ENCODE measurements at regions of chr7 and their contacts with region 1.

Region 1: DNA sequence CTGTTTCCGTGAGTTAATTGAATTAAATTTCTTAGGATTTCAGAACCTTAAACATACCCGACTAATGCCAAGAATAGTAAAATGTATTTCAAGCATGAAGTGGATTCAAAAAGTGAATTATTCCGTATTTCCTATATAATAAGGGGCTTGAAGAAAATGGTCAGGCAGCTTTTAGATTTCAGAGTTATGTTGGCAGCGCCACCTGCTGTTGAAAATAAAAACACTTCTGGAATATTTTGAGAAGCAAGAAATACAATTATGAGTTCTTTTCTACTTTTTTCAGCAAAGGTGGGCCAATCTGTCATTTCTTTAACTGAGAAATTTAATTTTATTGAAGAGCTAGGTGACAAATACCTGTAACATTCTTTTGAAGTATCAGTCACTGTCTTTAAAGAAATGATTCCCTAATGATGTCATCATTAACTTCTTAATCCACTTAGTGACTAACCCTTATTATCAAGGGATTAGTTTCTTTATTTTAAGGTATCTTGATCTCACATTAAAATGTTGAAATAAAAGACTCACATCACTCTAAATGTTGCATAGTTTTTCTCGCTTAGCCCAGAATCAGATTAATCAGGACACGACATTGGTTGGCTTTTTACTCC is 36.6 kb upstream of the AGR3 start:
- DNase-seq: no peak
- H3K4me3 Mint-ChIP-seq: no peak overlapping the region
- H3K27ac Mint-ChIP-seq: no peak overlapping the region
- H3K4me1 Mint-ChIP-seq: peaks cover 8% of the 10 kb centered on the region
- H3K27me3 Mint-ChIP-seq: no peaks in the 10 kb centered on the region

Region 2: DNA sequence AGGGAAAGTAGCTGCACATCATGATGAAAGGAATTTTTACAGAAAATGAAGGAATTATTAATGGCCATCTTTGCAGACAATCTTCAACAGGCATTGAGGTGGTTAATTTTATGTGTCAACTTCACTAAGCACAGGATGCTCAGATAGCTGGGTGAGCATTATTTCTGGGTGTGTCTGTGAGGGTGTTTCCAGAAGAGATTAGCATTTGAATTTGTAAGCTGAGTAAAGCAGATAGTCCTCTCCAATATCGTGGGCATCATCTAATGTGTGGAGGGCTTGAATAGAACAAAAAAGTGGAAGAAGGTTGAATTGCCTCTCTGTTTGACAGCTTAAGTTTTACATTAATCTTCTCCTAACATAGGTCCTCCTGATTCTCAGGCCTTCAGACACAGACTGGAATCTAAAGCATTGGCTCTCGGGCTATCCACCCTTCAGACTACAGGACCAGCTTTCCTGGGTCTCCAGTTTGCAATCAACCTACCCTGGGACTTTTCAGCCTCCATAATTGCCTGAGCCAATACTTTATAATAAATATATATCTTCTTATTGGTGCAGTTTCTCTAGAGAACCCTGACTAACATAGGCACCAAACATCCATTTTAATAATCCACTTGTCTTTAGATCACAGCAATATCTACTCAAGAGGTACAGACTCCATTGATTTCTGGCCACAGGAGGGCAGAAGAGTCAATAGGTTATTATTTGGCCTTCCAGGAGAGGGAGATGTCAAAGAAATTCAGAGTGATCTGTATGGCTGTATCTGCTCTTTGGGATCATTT is 486.6 kb before region 1 on chr7:
- intact Hi-C with region 1: loop called (anchors 1 kb)
- DNase-seq: no peak
- H3K4me3 Mint-ChIP-seq: no peak overlapping the region
- H3K27ac Mint-ChIP-seq: no peak overlapping the region
- H3K4me1 Mint-ChIP-seq: no peaks in the 10 kb centered on the region
- H3K27me3 Mint-ChIP-seq: peaks cover 8% of the 10 kb centered on the region

Region 3: GRCh38 chr7:16604054-16604453 is 314.3 kb before region 1 on chr7:
- intact Hi-C with region 1: loop called (anchors 1 kb)
- DNase-seq: no peak
- H3K4me3 Mint-ChIP-seq: no peak overlapping the region
- H3K27ac Mint-ChIP-seq: no peak overlapping the region
- H3K4me1 Mint-ChIP-seq: no peaks in the 10 kb centered on the region
- H3K27me3 Mint-ChIP-seq: no peaks in the 10 kb centered on the region

Region 4: DNA sequence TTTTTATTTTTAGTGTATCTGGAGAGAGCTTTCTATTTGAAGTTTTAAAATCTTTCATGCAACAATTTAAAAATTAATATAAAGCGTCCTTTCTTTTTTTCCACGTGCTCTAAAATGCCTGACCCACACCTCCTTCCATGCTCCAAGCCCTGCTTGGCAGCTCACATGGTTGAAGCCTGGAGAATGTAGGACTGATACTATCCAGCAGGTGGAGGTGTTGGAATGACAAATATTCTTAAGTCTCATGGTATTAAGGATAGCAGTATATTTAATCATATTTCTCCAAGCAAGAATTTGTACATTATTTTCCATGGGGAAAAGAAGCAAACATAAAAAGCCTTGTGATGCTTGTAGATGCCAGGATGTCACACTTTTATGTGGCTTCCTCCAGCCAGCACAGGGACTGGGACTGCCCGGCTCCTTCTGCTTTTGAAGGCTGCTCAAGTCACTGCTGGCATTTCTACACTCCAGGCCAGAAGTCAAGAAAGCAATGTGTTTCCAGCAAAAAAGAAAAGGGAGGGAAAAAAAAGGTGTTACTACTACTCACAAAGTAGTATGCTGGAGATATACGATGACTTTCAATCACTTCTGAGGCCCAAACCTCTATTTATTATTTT is 222.7 kb before region 1 on chr7:
- intact Hi-C with region 1: loop called (anchors 1 kb)
- DNase-seq: no peak
- H3K4me3 Mint-ChIP-seq: no peak overlapping the region
- H3K27ac Mint-ChIP-seq: no peak overlapping the region
- H3K4me1 Mint-ChIP-seq: no peaks in the 10 kb centered on the region
- H3K27me3 Mint-ChIP-seq: no peaks in the 10 kb centered on the region

Region 5: DNA sequence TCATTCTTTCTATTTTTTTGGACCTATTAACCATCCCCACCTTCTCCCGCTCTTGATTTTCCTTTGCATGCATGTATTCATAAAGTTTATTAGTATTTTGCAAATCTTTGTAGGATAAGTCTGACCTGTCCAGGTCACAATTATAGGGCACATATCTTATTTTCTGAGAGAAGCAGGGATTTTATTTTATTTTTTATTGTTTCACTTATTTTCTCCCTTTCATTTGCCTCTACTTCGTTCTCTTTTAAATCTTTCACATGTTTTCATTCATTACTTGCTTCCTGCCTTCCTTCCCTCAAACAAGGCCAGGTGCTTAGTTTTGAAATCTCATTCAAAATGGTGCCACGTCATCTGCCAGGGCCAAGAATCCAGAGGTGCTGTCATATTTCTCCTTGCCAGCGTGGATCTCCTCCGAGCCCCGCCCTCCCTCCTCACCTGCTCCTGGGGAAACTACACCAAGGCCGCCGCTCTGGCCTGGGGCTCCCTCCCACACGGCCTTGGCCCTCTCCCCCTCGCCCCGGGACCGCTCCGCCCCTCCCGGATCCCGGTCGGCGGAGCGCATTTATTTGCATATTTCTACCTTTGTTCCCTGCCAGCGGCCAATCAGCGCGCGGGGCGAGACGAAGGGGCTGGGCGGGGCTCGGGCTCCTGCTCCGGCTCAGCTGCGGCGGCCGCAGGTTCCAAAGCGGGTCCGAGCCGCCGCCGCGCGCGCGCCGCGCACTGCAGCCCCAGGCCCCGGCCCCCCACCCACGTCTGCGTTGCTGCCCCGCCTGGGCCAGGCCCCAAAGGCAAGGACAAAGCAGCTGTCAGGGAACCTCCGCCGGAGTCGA is 165.1 kb before region 1 on chr7 and contains the start of gene TSPAN13:
- intact Hi-C with region 1: loop called (anchors 5 kb)
- DNase-seq: peak; percentile 60
- H3K4me3 Mint-ChIP-seq: peak within 1 kb of the TSS; percentile 78
- H3K27ac Mint-ChIP-seq: peak within 1 kb of the TSS; percentile 42
- H3K4me1 Mint-ChIP-seq: peaks cover 15% of the 10 kb centered on the region
- H3K27me3 Mint-ChIP-seq: peaks cover 43% of the 10 kb centered on the region
- total RNA-seq, gene TSPAN13: 0.96 and 1.3 TPM in 2 replicates

Region 6: DNA sequence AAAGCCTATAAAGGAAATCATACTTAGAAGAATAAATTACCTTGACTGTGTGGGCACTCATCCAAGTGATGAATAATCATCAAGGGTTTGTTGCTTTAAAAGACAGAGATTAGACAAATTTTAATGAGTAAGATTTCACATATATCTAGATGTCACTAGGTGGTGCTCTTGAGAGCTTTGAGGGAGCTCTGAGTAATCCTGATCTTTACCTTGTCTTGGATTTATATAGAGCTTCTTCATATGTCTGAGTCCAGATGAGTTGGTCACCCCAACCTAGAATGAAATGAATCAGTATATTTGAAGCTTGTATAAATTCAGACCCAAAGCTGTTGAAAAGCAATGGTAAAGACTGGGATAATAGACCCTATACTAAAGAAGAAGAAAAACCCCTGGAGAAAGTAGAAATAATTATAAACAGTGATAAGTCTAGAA is 117.3 kb before region 1 on chr7:
- intact Hi-C with region 1: loop called (anchors 1 kb)
- DNase-seq: no peak
- H3K4me3 Mint-ChIP-seq: no peak overlapping the region
- H3K27ac Mint-ChIP-seq: no peak overlapping the region
- H3K4me1 Mint-ChIP-seq: no peaks in the 10 kb centered on the region
- H3K27me3 Mint-ChIP-seq: peaks cover 4% of the 10 kb centered on the region

Region 7: GRCh38 chr7:16891338-16891737 is 27.1 kb before region 1 on chr7:
- intact Hi-C with region 1: loop called (anchors 2 kb)
- DNase-seq: no peak
- H3K4me3 Mint-ChIP-seq: no peak overlapping the region
- H3K27ac Mint-ChIP-seq: no peak overlapping the region
- H3K4me1 Mint-ChIP-seq: peaks cover 9% of the 10 kb centered on the region
- H3K27me3 Mint-ChIP-seq: peaks cover 4% of the 10 kb centered on the region

Region 8: DNA sequence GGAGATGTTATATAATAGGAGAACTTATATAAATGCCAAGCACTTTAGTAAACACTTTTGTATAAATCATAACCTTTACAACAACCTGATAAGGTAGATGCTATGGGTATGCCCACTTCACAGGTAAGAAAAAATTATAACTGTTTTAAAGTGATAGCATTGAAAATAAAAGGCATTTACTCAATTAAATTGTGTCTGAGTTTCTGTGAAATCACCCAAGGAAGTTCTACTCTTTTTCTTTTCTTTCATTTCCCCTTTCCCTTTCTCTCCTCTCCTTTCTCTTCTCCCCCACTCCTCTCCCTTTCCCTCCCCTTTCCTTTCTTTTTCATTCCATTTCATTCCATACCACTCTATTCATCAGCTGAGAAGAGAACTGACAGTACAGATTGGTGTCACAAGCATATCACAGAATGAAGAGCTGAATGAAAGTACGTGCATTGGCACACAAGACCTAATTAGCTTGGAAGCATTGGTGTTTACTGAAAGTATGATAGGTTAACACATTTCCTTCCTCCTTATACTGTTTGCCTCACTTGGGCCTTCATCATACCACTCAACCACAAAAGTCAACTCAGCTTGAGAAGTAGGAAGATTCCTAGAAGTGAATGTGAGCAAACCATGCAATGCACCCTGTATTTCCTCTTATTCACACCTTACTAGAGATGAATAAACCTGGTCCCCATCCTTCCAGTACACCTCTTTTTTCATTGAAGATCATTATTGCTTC is 81.3 kb after region 1 on chr7:
- intact Hi-C with region 1: no loop called
- DNase-seq: peak; percentile 14
- H3K4me3 Mint-ChIP-seq: peak overlapping the region; percentile 62
- H3K27ac Mint-ChIP-seq: peak overlapping the region; percentile 77
- H3K4me1 Mint-ChIP-seq: peaks cover 17% of the 10 kb centered on the region
- H3K27me3 Mint-ChIP-seq: peaks cover 4% of the 10 kb centered on the region

Measured in activated T-helper 1 cell treated with anti-CD3 and anti-CD28 coated beads, Interleukin-12 subunit alpha, Interleukin-12 subunit beta, Interleukin-2, Interleukin-4 antibody, amounts not matched to agents 30 ng/mL and 10 ng/mL and 1 ng/mL, durations not matched to agents 14 hours and 24 hours and 36 hours (primary cell).